Activated CD8-positive, alpha-beta T cell treated with anti-CD3 and anti-CD28 coated beads, Interleukin-2, amount 10 ng/mL, durations not matched to agents 7 days and 5 days (primary cell): ENCODE measurements at regions of chr5 and their contacts with region 1.

Region 1: DNA sequence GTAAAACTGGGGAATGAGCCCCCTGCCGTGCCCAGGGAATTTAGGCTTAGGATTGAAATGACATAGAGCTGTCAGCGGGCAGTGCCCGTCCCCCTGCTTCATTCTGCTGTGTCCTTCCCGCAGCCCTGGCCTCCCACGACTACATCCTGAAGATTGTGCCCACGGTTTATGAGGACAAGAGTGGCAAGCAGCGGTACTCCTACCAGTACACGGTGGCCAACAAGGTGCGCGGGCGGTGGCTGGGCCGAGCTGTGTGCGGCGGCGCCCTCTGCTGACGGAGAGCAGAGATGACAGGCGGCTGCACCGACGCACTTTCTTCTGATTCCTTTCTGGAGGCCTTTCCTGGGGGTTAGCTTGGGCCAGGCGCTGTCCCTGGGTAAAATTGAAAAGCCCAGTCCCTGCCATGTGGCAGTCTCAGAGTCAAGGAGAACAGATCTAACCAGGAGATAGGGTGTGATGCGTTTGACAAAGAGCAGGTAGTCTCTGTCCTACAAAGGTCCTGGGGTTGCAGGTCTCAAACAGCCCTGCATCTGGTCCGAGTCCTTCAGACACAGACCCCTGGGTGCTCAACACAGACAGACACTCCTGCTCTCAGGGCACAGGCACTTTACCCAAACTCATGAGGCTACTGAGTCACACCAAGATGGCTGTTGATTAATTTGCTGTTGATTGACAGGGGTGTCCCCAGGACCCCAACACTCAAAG is 26.8 kb upstream of the RPL26L1 start:
- DNase-seq: peak; percentile 76
- ATAC-seq: peak; percentile 93
- H3K4me3 Mint-ChIP-seq: no peak overlapping the region
- H3K27ac Mint-ChIP-seq: peak overlapping the region; percentile 45
- H3K4me1 Mint-ChIP-seq: peaks cover 1% of the 10 kb centered on the region
- H3K27me3 Mint-ChIP-seq: no peaks in the 10 kb centered on the region

Region 2: GRCh38 chr5:172721301-172722130 is 210.9 kb before region 1 on chr5:
- CTCF ChIA-PET with region 1: interaction called, 42 read pairs
- POLR2A ChIA-PET with region 1: no interaction called
- DNase-seq: no peak
- ATAC-seq: no peak
- H3K4me3 Mint-ChIP-seq: no peak overlapping the region
- H3K27ac Mint-ChIP-seq: no peak overlapping the region
- H3K4me1 Mint-ChIP-seq: peaks cover 15% of the 10 kb centered on the region
- H3K27me3 Mint-ChIP-seq: peaks cover 2% of the 10 kb centered on the region

Region 3: GRCh38 chr5:172764849-172765765 is 167.4 kb before region 1 on chr5:
- CTCF ChIA-PET with region 1: interaction called, 37 read pairs
- POLR2A ChIA-PET with region 1: interaction called, 4 read pairs
- DNase-seq: peak; percentile 98
- ATAC-seq: peak; percentile 73
- H3K4me3 Mint-ChIP-seq: peak overlapping the region; percentile 77
- H3K27ac Mint-ChIP-seq: peak overlapping the region; percentile 89
- H3K4me1 Mint-ChIP-seq: peaks cover 40% of the 10 kb centered on the region
- H3K27me3 Mint-ChIP-seq: peaks cover 6% of the 10 kb centered on the region